ENCODE measurements at regions of chr1 and their contacts with region 1.

Region 1: DNA sequence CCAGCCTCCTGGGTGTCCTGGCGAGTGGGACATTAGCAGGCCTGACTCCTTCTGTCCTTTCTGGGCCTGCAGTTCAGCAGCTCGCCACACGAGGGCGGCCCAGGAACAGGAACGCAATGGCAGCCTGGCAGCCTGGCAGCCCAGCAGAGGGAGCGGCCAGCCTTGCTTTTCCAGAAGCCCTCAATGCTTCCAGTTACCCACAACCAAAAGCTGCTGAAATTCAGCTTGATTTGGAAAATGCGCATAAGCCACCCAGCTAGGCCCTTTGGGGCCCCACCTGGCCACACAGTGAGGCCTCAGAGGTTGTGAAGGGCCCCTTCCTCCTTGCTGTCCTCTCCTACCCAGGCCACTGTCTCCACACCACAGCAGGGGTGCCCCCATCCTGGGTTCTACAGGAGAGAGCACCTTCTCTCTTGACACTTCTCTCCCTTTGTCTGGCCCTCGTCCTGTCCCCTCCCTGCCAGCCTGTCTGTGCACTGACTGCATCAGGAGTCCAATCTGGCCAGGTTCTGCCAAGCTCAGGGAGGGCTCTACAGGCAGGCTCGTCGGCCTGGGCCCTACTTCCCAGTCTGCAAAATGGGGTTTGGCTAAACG is 103.4 kb upstream of the VAMP3 start:
- DNase-seq: peak; percentile 84
- ATAC-seq: peak; percentile 78
- H3K4me3 Mint-ChIP-seq: no peak overlapping the region
- H3K27ac Mint-ChIP-seq: no peak overlapping the region
- H3K4me1 Mint-ChIP-seq: peaks cover 13% of the 10 kb centered on the region
- H3K27me3 Mint-ChIP-seq: peaks cover 5% of the 10 kb centered on the region
- CTCF ChIP-seq: peak; percentile 86

Region 2: DNA sequence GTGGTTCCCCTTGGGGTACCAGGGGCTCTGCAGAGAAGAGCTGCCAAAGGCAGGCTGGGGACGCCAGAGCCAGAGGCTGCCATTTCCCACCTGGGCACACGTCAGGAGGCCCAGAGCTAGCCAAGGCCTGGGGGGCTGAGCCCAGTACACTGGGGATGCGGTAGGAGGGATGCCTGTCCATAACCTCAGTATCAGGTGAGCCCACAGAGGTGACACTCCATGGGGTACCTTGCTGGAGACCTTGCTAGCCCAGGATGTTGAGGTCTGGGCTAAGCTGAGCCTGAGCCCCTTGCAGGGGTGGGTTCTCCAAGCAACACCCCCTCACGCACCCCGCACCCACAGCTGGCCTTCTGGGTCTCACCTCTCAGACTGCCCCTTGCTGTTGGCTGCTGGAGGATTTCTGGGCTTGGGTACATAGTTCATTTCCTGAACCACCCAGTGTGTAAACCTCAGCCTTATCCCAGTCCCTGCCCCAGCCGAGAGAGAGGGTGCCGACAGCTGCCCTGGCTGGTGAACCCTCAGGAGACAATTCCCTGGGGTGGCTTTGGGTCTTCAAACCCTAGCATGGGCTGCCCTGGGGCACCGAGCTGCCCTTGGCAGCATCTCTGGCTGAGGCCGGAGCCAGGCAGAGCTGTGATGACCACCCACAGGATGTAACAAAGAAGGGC is 10.9 kb after region 1 on chr1:
- CTCF ChIA-PET with region 1: interaction called, 14 read pairs
- POLR2A ChIA-PET with region 1: no interaction called
- intact Hi-C with region 1: no loop called
- DNase-seq: no peak
- ATAC-seq: no peak
- H3K4me3 Mint-ChIP-seq: peak overlapping the region; percentile 38
- H3K27ac Mint-ChIP-seq: no peak overlapping the region
- H3K4me1 Mint-ChIP-seq: no peaks in the 10 kb centered on the region
- H3K27me3 Mint-ChIP-seq: peaks cover 9% of the 10 kb centered on the region
- CTCF ChIP-seq: no peak

Region 3: DNA sequence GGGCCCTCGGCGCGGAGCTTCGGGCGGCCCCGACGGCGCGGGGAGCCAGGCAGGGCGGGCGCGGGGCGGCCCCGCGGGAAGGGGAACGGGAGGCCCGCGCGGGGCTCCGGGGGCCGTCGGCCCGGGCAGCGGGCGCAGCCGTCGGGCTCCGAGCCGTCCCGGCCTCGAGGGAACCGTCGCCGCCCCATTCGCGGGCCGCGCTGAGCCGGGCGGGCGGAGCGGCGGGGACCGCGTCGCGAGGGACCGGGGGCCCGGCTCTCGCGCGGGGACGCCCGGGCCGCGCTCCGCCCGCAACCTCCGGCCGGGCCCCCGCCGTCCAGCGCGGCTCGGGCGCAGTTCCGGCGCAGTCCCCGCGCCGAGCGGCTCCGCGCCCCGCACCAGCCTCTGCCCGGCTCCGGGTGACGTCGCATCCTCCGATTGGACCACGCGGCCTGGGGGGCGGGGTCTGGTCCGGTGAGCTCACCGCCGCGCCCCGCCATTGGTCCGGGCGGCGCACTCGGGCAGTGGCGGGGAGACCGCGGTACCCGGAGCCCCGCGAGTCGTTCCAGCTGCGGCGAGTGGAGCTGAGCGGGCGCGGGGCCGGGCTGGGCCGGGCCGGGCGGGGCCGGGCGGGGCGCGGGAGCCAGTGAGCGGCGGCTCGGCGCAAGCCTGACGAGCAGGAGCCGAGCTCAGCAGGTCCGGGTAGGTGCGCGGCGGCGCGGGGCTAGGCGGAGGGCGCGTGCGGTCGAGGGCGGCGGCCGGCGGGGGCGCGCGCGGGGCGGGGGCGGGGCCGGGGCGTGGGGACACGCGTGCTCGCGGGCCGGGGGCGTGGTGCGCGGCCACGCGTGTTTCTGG is 36.7 kb after region 1 on chr1:
- CTCF ChIA-PET with region 1: interaction called, 11 read pairs
- POLR2A ChIA-PET with region 1: no interaction called
- intact Hi-C with region 1: no loop called
- DNase-seq: peak; percentile 99
- ATAC-seq: peak; percentile 98
- H3K4me3 Mint-ChIP-seq: peak overlapping the region; percentile 82
- H3K27ac Mint-ChIP-seq: no peak overlapping the region
- H3K4me1 Mint-ChIP-seq: peaks cover 12% of the 10 kb centered on the region
- H3K27me3 Mint-ChIP-seq: peaks cover 11% of the 10 kb centered on the region
- CTCF ChIP-seq: no peak

Region 4: DNA sequence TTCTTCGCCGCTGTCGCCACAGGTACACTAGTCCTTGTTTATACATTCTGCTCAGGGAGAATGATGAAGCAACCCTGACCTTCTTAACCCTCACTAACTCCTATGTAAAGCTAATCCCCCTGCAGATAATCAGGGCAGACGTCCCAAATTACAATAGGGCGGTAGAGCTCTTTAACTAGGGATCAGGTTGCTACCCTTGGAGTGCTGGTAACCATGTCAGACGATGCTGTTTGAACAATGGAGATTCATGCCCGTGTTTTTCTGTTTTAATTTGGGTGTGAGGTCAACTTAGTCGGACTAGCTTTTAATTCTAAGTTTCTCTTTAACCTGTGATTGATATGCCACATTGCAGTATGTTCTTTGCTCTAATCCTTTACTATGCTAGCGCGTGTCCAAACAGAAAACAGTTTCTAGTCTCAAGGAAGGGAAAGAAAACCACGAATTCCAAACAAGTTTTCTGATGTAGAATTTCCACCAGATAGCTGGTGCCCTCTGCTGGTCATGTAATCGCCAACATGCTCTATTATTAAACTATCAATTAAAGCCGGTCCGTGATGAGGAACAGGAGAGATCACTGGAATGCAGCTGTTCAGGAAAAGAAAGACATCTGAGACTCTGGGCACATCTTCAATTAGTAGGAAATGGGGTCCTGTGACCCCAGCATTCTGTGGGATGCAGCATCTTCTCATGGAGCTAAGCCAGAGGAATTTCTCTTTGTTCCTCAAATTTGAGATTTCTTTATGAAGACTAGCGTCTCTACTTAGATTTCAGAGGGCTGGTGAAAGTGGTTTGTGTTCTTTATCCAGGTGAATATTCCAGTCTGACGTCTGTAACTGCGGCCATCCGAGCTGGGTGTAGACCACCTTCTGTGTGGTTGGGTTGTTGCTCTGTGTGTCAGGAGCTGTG is 85.0 kb after region 1 on chr1:
- CTCF ChIA-PET with region 1: interaction called, 270 read pairs
- POLR2A ChIA-PET with region 1: interaction called, 3 read pairs
- intact Hi-C with region 1: loop called (anchors 1 kb)
- DNase-seq: no peak
- ATAC-seq: no peak
- H3K4me3 Mint-ChIP-seq: peak overlapping the region; percentile 17
- H3K27ac Mint-ChIP-seq: no peak overlapping the region
- H3K4me1 Mint-ChIP-seq: peaks cover 5% of the 10 kb centered on the region
- H3K27me3 Mint-ChIP-seq: no peaks in the 10 kb centered on the region
- CTCF ChIP-seq: no peak

Region 5: DNA sequence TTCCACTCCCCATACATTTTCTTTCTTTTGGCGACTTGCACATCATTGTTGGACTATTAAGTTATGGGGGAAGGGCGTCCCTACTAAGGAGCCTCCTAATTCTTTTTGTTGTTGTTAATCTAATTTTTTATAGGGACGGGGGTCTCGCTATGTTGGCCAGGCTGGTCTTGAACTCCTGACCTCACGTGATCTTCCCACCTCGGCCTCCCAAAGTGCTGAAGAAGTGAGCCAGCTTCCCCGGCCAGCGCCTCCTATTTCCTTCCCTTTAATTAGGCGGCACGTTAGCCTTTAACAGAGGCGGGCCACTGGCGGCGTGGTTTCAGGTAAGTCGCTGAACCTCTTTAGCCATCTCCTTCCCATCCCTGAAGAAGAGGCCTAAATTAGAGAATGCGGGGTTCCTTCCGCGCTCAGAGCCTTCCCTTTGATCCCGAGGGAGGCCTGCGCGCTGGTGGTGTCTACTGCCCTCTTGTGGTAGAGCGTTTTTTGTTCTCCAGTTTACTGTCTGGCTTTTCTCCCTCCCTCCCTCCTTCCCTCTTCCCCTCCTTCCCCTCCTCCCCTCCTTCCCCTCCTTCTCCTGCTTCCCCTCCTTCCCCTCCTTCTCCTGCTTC is 234.9 kb after region 1 on chr1:
- CTCF ChIA-PET with region 1: interaction called, 7 read pairs
- POLR2A ChIA-PET with region 1: no interaction called
- intact Hi-C with region 1: loop called (anchors 1 kb)
- DNase-seq: peak; percentile 42
- ATAC-seq: peak; percentile 82
- H3K4me3 Mint-ChIP-seq: peak overlapping the region; percentile 56
- H3K27ac Mint-ChIP-seq: no peak overlapping the region
- H3K4me1 Mint-ChIP-seq: peaks cover 4% of the 10 kb centered on the region
- H3K27me3 Mint-ChIP-seq: no peaks in the 10 kb centered on the region
- CTCF ChIP-seq: peak; percentile 54

Region 6: DNA sequence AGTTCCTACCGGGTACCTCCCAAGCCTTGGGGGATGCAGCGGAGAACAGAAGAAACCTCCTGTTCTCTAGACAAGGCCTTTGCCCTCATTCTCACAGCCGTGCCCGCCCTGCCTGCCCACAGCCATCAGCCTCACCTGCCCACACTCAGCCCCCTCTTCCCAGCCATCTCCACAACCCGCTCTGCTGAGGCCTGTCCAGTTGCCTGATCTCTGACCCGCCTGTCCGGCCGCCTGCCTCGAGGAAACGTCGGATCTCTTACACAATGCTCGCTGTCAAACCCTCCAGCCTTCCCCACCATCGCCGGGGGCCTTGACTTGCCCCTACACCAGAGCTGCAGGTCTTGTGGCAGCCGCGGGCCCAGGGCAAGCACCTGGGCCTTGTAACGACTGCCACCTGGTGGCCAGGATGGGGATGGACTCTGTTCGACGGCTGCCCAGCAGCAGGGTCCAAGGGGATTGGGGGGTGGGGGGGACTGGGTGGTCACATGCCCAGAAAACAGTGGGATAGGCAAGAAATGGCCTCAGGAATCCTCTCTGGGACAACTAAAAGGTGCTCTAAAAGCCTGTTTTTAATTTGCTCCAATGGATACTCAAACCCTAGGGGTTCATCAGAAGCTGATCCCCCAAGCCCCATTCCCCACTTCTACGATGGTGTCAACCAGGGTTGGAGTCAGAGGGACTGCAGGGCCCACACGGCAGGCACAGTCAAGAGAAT is 681.2 kb after region 1 on chr1:
- CTCF ChIA-PET with region 1: interaction called, 3 read pairs
- POLR2A ChIA-PET with region 1: no interaction called
- intact Hi-C with region 1: loop called (anchors 5 kb)
- DNase-seq: peak; percentile 64
- ATAC-seq: peak; percentile 89
- H3K4me3 Mint-ChIP-seq: no peak overlapping the region
- H3K27ac Mint-ChIP-seq: no peak overlapping the region
- H3K4me1 Mint-ChIP-seq: peaks cover 4% of the 10 kb centered on the region
- H3K27me3 Mint-ChIP-seq: no peaks in the 10 kb centered on the region
- CTCF ChIP-seq: no peak

Measured in activated B cell treated with CpG ODN at 0.5 μM for 24 hours (primary cell).